ENCODE measurements at regions of chr18 and their contacts with region 1.

Region 1: GRCh38 chr18:8988261-8988871 is 114.1 kb upstream of the NDUFV2 start:
- DNase-seq: peak; percentile 81
- H3K4me3 ChIP-seq: no peak overlapping the region
- H3K27ac ChIP-seq: no peak overlapping the region
- H3K4me1 ChIP-seq: no peaks in the 10 kb centered on the region
- H3K27me3 ChIP-seq: peaks cover 0 to 17% (median 0%) of the 10 kb centered on the region in 7 donors
- CTCF ChIP-seq: peak; percentile 18 to 81 (median 74)
- POLR2A ChIP-seq: no peak

Region 2: GRCh38 chr18:8657873-8658469 is 330.4 kb before region 1 on chr18:
- intact Hi-C with region 1: loop called (anchors 2 kb)
- DNase-seq: no peak
- H3K4me3 ChIP-seq: no peak overlapping the region
- H3K27ac ChIP-seq: no peak overlapping the region
- H3K4me1 ChIP-seq: peaks cover 0 to 13% (median 6%) of the 10 kb centered on the region in 6 donors
- H3K27me3 ChIP-seq: peaks cover 0 to 14% (median 0%) of the 10 kb centered on the region in 7 donors
- CTCF ChIP-seq: no peak
- POLR2A ChIP-seq: no peak

Region 3: DNA sequence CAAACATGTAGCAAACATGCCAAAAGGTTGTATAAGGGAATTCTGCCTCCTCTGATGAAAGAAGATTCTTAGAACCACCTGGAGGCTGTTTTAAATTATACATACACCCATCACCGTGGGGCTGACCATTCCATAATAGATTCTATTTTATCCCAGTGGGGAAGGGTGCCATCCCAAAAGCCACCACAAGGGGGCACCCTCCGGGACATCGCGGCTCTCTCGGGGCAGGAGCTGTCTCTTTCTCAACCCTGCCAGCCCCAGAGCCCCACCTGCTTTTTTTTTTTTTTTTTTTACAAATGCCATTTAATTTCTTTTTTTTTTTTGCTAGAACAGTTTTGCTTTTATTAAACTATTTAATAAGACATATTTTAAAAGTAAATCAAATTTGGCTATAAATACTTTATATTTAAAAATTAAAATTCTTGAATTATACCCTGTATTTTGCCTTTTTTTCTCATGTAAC is 291.6 kb before region 1 on chr18:
- intact Hi-C with region 1: loop called (anchors 2 kb)
- DNase-seq: peak; percentile 91
- H3K4me3 ChIP-seq: no peak overlapping the region
- H3K27ac ChIP-seq: no peak overlapping the region
- H3K4me1 ChIP-seq: peaks cover 0 to 15% (median 8%) of the 10 kb centered on the region in 6 donors
- H3K27me3 ChIP-seq: peaks cover 0 to 26% (median 0%) of the 10 kb centered on the region in 7 donors
- CTCF ChIP-seq: peak; percentile 76 to 95 (median 88)
- POLR2A ChIP-seq: no peak

Region 4: DNA sequence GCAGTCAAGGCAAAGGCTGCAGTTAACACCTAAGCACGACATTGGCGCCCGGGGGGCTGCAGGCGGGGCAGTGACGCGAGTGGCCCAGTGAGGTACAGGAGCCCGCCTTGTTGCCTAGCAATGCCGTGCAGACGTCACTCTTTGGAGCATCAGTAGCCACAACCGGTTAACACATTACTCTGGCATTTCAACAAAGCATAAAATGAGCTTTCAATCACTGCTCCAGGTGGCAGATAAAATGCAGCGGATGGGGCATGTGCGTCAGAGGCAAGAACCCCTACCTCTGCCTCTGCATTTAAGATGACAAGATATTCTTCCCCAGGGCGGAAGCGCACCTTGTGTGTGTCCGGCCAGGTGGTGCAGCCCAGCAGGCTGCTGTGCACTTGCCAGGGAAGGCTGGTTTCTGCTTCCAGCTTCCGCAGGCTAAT is 143.6 kb before region 1 on chr18:
- intact Hi-C with region 1: no loop called
- DNase-seq: no peak
- H3K4me3 ChIP-seq: no peak overlapping the region
- H3K27ac ChIP-seq: no peak overlapping the region
- H3K4me1 ChIP-seq: no peaks in the 10 kb centered on the region
- H3K27me3 ChIP-seq: peaks cover 0 to 8% (median 0%) of the 10 kb centered on the region in 7 donors
- CTCF ChIP-seq: no peak
- POLR2A ChIP-seq: no peak

Region 5: GRCh38 chr18:9173770-9174233 is 185.4 kb after region 1 on chr18:
- intact Hi-C with region 1: no loop called
- DNase-seq: no peak
- H3K4me3 ChIP-seq: no peak overlapping the region
- H3K27ac ChIP-seq: peak overlapping the region in 4 of 8 donors; percentile 40 to 67 (median 51)
- H3K4me1 ChIP-seq: peaks cover 3 to 89% (median 51%) of the 10 kb centered on the region in 6 donors
- H3K27me3 ChIP-seq: no peaks in the 10 kb centered on the region
- CTCF ChIP-seq: no peak
- POLR2A ChIP-seq: no peak

Region 6: GRCh38 chr18:9275890-9276289 is 287.5 kb after region 1 on chr18:
- intact Hi-C with region 1: no loop called
- DNase-seq: no peak
- H3K4me3 ChIP-seq: no peak overlapping the region
- H3K27ac ChIP-seq: no peak overlapping the region
- H3K4me1 ChIP-seq: no peaks in the 10 kb centered on the region
- H3K27me3 ChIP-seq: no peaks in the 10 kb centered on the region
- CTCF ChIP-seq: no peak
- POLR2A ChIP-seq: no peak

Region 7: GRCh38 chr18:9984080-9984479 is 995.7 kb after region 1 on chr18:
- intact Hi-C with region 1: no loop called
- DNase-seq: no peak
- H3K4me3 ChIP-seq: no peak overlapping the region
- H3K27ac ChIP-seq: no peak overlapping the region
- H3K4me1 ChIP-seq: peaks cover 0 to 4% (median 0%) of the 10 kb centered on the region in 6 donors
- H3K27me3 ChIP-seq: no peaks in the 10 kb centered on the region
- CTCF ChIP-seq: no peak
- POLR2A ChIP-seq: no peak

Measured in spleen (tissue), 13 donors.